ENCODE measurements at regions of chr14 and their contacts with region 1.

Region 1: DNA sequence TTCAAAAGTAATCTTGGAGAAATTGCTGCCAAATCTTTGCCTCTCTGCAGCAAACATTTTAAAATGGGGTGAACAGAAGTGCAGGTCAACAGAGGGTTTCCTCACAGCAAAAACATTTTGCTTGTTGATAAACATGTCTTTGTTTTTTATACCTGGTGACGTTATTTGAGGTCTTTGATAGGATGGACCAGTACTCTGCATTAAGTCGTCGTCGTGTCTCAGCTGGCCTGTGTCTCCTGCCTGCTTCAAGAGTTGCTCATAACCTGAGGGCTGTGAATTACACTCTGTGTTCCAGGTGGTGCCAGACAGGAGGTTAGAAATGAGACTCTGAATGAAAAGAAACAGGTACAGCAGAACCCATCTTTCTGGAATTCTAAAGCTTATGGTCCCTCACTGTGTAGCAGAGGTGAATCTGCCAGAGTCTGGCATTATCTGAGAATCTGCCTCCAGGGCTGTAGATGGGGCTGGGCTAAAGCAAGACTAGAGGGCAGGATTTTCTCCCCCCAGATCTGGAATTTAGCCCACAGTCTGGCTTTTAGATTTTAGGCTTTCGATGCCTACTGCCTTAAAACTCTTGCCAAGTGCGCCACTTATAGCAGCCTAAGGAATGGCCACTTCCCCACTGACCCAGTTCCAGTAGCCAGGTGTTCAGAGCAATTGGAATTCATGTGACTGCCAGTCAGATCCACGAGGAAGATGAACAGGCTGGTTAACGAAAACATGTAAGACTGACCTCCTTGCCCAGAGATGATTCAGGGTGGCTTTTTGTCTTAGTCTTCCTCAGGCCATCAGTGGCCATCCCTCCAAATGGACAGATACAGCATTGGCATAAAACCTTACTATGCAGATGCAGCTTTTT is 161.2 kb downstream of the PRKCH start:
- DNase-seq: no peak
- H3K4me3 ChIP-seq: no peak overlapping the region
- H3K27ac ChIP-seq: peak overlapping the region; percentile 1; the same call in 1 of the 2 replicates
- H3K4me1 ChIP-seq: peaks cover 82% of the 10 kb centered on the region
- H3K27me3 ChIP-seq: no peaks in the 10 kb centered on the region
- CTCF ChIP-seq: no peak

Region 2: GRCh38 chr14:61344437-61345150 is 138.0 kb before region 1 on chr14:
- CTCF ChIA-PET with region 1: interaction called, 18 read pairs
- POLR2A ChIA-PET with region 1: no interaction called
- intact Hi-C with region 1: no loop called
- DNase-seq: no peak
- H3K4me3 ChIP-seq: no peak overlapping the region
- H3K27ac ChIP-seq: no peak overlapping the region
- H3K4me1 ChIP-seq: peaks cover 22% of the 10 kb centered on the region
- H3K27me3 ChIP-seq: no peaks in the 10 kb centered on the region
- CTCF ChIP-seq: no peak

Region 3: GRCh38 chr14:61681413-61681812 is 198.8 kb after region 1 on chr14:
- CTCF ChIA-PET with region 1: interaction called, 14 read pairs
- POLR2A ChIA-PET with region 1: no interaction called
- intact Hi-C with region 1: no loop called
- DNase-seq: no peak
- H3K4me3 ChIP-seq: no peak overlapping the region
- H3K27ac ChIP-seq: no peak overlapping the region
- H3K4me1 ChIP-seq: no peaks in the 10 kb centered on the region
- H3K27me3 ChIP-seq: no peaks in the 10 kb centered on the region
- CTCF ChIP-seq: no peak

Measured in PC-9 (cell line).